ENCODE measurements at regions of chr3 and their contacts with region 1.

Region 1: GRCh38 chr3:112979240-112979832 is 4.4 kb upstream of the CD200R1 start:
- DNase-seq: peak; percentile 13
- ATAC-seq: peak; percentile 34; the same call in 1 of the 2 replicates
- H3K4me3 ChIP-seq: no peak overlapping the region
- H3K27ac ChIP-seq: no peak overlapping the region
- H3K4me1 ChIP-seq: no peaks in the 10 kb centered on the region
- H3K27me3 ChIP-seq: no peaks in the 10 kb centered on the region
- CTCF ChIP-seq: peak; percentile 42 to 77 (median 66); a peak in 5 of 6 replicates
- POLR2A ChIP-seq: no peak
- RAD21 ChIP-seq: peak; percentile 69

Region 2: GRCh38 chr3:112990672-112991602 is 11.6 kb after region 1 on chr3 and contains the start of gene GTPBP8:
- CTCF ChIA-PET with region 1: interaction called, 14 read pairs
- POLR2A ChIA-PET with region 1: interaction called, 7 read pairs
- RAD21 ChIA-PET with region 1: no interaction called
- intact Hi-C with region 1: no loop called
- DNase-seq: peak; percentile 86
- ATAC-seq: peak; percentile 96
- H3K4me3 ChIP-seq: peak within 1 kb of the TSS; percentile 80 to 87
- H3K27ac ChIP-seq: peak within 1 kb of the TSS; percentile 81
- H3K4me1 ChIP-seq: peaks cover 8 to 17% of the 10 kb centered on the region in 2 experiments
- H3K27me3 ChIP-seq: no peaks in the 10 kb centered on the region
- CTCF ChIP-seq: no peak
- POLR2A ChIP-seq: peak; percentile 92
- RAD21 ChIP-seq: no peak
- total RNA-seq, gene GTPBP8: 16.4 TPM

Region 3: DNA sequence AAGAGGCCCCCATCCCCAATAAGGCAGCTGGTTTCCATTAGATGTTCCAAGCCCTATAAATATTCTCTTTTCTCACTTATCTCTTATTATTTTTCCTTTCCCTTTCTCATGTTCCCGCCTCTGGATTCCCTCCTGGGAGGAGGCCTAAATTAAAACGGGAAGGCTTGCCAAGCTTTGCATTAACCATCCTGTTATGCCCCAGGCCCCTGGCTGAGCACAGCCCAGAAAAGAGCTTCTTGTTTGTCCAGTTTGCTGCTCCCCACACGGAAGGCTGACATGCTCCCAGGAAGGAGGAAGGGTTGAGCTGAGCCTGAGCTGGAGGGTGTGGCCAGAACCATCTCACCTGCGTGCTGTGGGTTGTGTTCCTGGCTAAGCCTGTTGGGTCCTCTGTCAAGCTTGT is 168.9 kb after region 1 on chr3:
- CTCF ChIA-PET with region 1: no interaction called
- POLR2A ChIA-PET with region 1: no interaction called
- RAD21 ChIA-PET with region 1: no interaction called
- intact Hi-C with region 1: no loop called
- DNase-seq: no peak
- ATAC-seq: no peak
- H3K4me3 ChIP-seq: no peak overlapping the region
- H3K27ac ChIP-seq: no peak overlapping the region
- H3K4me1 ChIP-seq: no peaks in the 10 kb centered on the region
- H3K27me3 ChIP-seq: no peaks in the 10 kb centered on the region
- CTCF ChIP-seq: no peak
- POLR2A ChIP-seq: no peak
- RAD21 ChIP-seq: no peak

Measured in HCT116 (cell line).